ENCODE measurements at regions of chr1 and their contacts with region 1.

Region 1: DNA sequence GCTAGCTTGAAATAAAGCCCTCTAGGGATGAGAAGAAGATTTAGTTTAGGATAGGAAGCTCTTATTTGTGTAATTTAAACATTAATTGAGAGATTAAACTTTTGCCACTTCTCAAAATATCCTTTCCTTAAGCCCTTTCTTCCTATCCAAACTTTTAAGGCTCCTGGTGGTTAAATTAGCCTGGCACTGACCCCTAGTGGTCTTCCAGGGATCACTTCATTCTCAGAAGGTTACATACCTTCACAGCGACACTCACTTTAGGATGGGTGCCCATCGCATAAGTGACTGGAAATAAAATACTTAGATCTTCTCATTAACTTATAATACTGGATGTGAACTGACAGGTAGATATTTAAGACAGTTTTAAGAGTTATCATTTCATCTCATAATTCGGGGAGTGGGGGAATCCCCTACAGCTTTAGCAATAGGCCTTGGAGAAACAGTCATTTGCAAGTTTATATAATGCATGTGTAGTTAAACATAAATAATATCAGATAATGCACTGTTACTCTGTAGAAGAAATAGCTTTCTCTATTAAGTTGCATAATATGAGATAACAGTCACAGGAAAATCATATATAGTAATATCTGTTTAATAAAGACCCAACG is 7.4 kb downstream of the LHX9 start:
- DNase-seq: peak; percentile 66
- ATAC-seq: peak; percentile 70
- H3K4me3 ChIP-seq: no peak overlapping the region
- H3K4me3 Mint-ChIP-seq: no peak overlapping the region
- H3K27ac ChIP-seq: no peak overlapping the region
- H3K27ac Mint-ChIP-seq: no peak overlapping the region
- H3K4me1 ChIP-seq: peaks cover 23% of the 10 kb centered on the region in 2 donors
- H3K4me1 Mint-ChIP-seq: peaks cover 15% of the 10 kb centered on the region
- H3K27me3 ChIP-seq: peaks cover 0 to 60% (median 51%) of the 10 kb centered on the region in 4 experiments
- H3K27me3 Mint-ChIP-seq: peaks cover 79% of the 10 kb centered on the region
- CTCF ChIP-seq: peak; percentile 83

Region 2: GRCh38 chr1:197521118-197521739 is 403.4 kb before region 1 on chr1:
- CTCF ChIA-PET with region 1: interaction called, 21 read pairs
- POLR2A ChIA-PET with region 1: no interaction called
- intact Hi-C with region 1: loop called (anchors 1 kb)
- DNase-seq: peak; percentile 54
- ATAC-seq: peak; percentile 49
- H3K4me3 ChIP-seq: no peak overlapping the region
- H3K4me3 Mint-ChIP-seq: no peak overlapping the region
- H3K27ac ChIP-seq: no peak overlapping the region
- H3K27ac Mint-ChIP-seq: no peak overlapping the region
- H3K4me1 ChIP-seq: no peaks in the 10 kb centered on the region
- H3K4me1 Mint-ChIP-seq: no peaks in the 10 kb centered on the region
- H3K27me3 ChIP-seq: no peaks in the 10 kb centered on the region
- H3K27me3 Mint-ChIP-seq: no peaks in the 10 kb centered on the region
- CTCF ChIP-seq: peak; percentile 84

Region 3: GRCh38 chr1:197526736-197527371 is 397.8 kb before region 1 on chr1:
- CTCF ChIA-PET with region 1: interaction called, 21 read pairs
- POLR2A ChIA-PET with region 1: no interaction called
- intact Hi-C with region 1: loop called (anchors 1 kb)
- DNase-seq: peak; percentile 48
- ATAC-seq: no peak
- H3K4me3 ChIP-seq: no peak overlapping the region
- H3K4me3 Mint-ChIP-seq: no peak overlapping the region
- H3K27ac ChIP-seq: no peak overlapping the region
- H3K27ac Mint-ChIP-seq: no peak overlapping the region
- H3K4me1 ChIP-seq: no peaks in the 10 kb centered on the region
- H3K4me1 Mint-ChIP-seq: no peaks in the 10 kb centered on the region
- H3K27me3 ChIP-seq: no peaks in the 10 kb centered on the region
- H3K27me3 Mint-ChIP-seq: no peaks in the 10 kb centered on the region
- CTCF ChIP-seq: peak; percentile 87

Region 4: GRCh38 chr1:197614916-197615692 is 309.5 kb before region 1 on chr1:
- CTCF ChIA-PET with region 1: interaction called, 22 read pairs
- POLR2A ChIA-PET with region 1: no interaction called
- intact Hi-C with region 1: loop called (anchors 1 kb)
- DNase-seq: peak; percentile 42
- ATAC-seq: peak; percentile 49
- H3K4me3 ChIP-seq: no peak overlapping the region
- H3K4me3 Mint-ChIP-seq: no peak overlapping the region
- H3K27ac ChIP-seq: no peak overlapping the region
- H3K27ac Mint-ChIP-seq: no peak overlapping the region
- H3K4me1 ChIP-seq: no peaks in the 10 kb centered on the region
- H3K4me1 Mint-ChIP-seq: no peaks in the 10 kb centered on the region
- H3K27me3 ChIP-seq: no peaks in the 10 kb centered on the region
- H3K27me3 Mint-ChIP-seq: no peaks in the 10 kb centered on the region
- CTCF ChIP-seq: peak; percentile 70

Region 5: DNA sequence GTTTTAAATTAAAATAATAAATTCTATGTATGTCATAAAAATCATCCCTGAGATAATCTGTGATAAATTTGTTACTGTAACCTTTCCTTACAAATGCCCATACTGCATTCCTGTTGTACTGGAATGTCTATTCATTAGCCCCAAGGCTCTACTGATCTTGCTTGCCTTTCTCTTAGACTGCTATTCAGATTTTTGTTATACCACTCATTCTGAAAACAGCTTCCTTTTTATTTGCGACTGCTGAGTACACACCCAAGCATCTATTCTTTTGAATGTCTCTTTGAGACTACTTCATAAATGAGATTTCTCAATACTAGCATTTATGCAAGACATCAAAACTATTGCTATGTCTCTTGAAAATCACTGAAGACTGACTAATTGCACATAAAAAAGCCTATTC is 188.0 kb before region 1 on chr1:
- CTCF ChIA-PET with region 1: no interaction called
- POLR2A ChIA-PET with region 1: no interaction called
- intact Hi-C with region 1: no loop called
- DNase-seq: no peak
- ATAC-seq: no peak
- H3K4me3 ChIP-seq: no peak overlapping the region
- H3K4me3 Mint-ChIP-seq: no peak overlapping the region
- H3K27ac ChIP-seq: no peak overlapping the region
- H3K27ac Mint-ChIP-seq: no peak overlapping the region
- H3K4me1 ChIP-seq: no peaks in the 10 kb centered on the region
- H3K4me1 Mint-ChIP-seq: peaks cover 30% of the 10 kb centered on the region
- H3K27me3 ChIP-seq: no peaks in the 10 kb centered on the region
- H3K27me3 Mint-ChIP-seq: no peaks in the 10 kb centered on the region
- CTCF ChIP-seq: no peak

Region 6: GRCh38 chr1:198472113-198472512 is 547.5 kb after region 1 on chr1:
- CTCF ChIA-PET with region 1: no interaction called
- POLR2A ChIA-PET with region 1: no interaction called
- intact Hi-C with region 1: no loop called
- DNase-seq: no peak
- ATAC-seq: no peak
- H3K4me3 ChIP-seq: no peak overlapping the region
- H3K4me3 Mint-ChIP-seq: no peak overlapping the region
- H3K27ac ChIP-seq: no peak overlapping the region
- H3K27ac Mint-ChIP-seq: no peak overlapping the region
- H3K4me1 ChIP-seq: no peaks in the 10 kb centered on the region
- H3K4me1 Mint-ChIP-seq: peaks cover 2% of the 10 kb centered on the region
- H3K27me3 ChIP-seq: no peaks in the 10 kb centered on the region
- H3K27me3 Mint-ChIP-seq: no peaks in the 10 kb centered on the region
- CTCF ChIP-seq: no peak

Measured in B cell (primary cell).